Naive thymus-derived CD4-positive, alpha-beta T cell (primary cell): ENCODE measurements at regions of chr12 and their contacts with region 1.

Region 1: GRCh38 chr12:120060196-120060595 is 56.4 kb downstream of the RAB35 start:
- DNase-seq: no peak
- ATAC-seq: no peak
- H3K4me3 ChIP-seq: no peak overlapping the region
- H3K4me3 Mint-ChIP-seq: no peak overlapping the region
- H3K27ac ChIP-seq: no peak overlapping the region
- H3K27ac Mint-ChIP-seq: no peak overlapping the region
- H3K4me1 ChIP-seq: no peaks in the 10 kb centered on the region
- H3K4me1 Mint-ChIP-seq: peaks cover 0 to 13% (median 0%) of the 10 kb centered on the region in 7 donors
- H3K27me3 ChIP-seq: no peaks in the 10 kb centered on the region
- H3K27me3 Mint-ChIP-seq: no peaks in the 10 kb centered on the region

Region 2: DNA sequence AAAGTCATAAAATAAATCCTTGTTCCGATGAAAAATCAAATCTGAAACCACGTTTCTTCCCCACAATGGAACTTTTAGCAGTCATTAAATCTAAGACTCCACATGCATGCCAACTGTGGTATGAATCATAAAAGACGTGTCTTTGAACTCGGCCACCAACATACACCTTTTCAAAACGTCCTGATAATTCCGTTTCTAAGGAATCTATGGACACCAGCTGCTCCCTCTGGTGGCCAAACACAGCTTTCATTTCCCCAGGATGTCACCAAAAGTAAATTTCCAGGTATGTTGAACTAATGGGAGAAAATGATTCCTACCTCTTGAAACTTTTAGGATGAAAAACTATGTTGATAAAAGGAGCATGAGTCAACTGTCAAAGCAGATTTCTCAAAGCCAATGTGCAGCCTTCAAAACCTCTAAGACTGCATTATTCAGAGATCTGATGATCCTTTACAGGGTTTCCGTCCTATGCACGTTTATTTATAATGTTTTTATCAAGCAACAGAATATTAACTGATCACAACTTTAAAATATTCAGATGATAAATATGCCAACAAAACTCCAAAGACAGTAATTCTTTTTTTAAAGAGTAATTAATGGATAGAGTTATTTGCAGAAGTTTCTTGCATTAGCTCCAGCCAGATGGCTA is 279.3 kb before region 1 on chr12:
- CTCF ChIA-PET with region 1: no interaction called
- POLR2A ChIA-PET with region 1: no interaction called
- intact Hi-C with region 1: no loop called
- DNase-seq: no peak
- ATAC-seq: no peak
- H3K4me3 ChIP-seq: no peak overlapping the region
- H3K4me3 Mint-ChIP-seq: no peak overlapping the region
- H3K27ac ChIP-seq: no peak overlapping the region
- H3K27ac Mint-ChIP-seq: no peak overlapping the region
- H3K4me1 ChIP-seq: no peaks in the 10 kb centered on the region
- H3K4me1 Mint-ChIP-seq: peaks cover 0 to 10% (median 0%) of the 10 kb centered on the region in 7 donors
- H3K27me3 ChIP-seq: no peaks in the 10 kb centered on the region
- H3K27me3 Mint-ChIP-seq: no peaks in the 10 kb centered on the region

Region 3: DNA sequence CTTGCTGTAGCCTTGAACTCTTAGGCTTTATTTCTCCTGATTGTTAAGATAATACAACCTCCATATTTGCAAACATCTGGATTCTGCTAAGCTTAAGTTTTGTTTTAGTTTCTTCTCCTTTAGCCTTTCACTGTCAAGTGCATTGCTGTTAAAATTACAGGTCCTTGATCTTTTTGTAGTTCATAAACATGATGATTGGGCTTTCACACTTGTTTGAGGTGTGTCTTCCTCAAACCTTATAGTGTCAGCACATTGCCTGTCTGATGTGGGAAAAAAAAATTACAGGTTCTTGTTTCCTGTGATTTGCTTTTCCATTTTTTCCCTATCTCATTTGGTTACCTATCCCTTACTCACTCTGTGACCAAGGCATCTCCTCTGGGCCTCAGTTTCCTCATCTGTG is 11.9 kb before region 1 on chr12:
- CTCF ChIA-PET with region 1: interaction called, 3 read pairs
- POLR2A ChIA-PET with region 1: no interaction called
- intact Hi-C with region 1: loop called in 1 of 2 experiments (anchors 2 kb)
- DNase-seq: peak in 4 of 9 donors; percentile 14 to 31 (median 20)
- ATAC-seq: peak; percentile 74
- H3K4me3 ChIP-seq: no peak overlapping the region
- H3K4me3 Mint-ChIP-seq: peak overlapping the region in 6 of 10 donors; percentile 12 to 59 (median 38)
- H3K27ac ChIP-seq: no peak overlapping the region
- H3K27ac Mint-ChIP-seq: peak overlapping the region; percentile 62 to 90 (median 87)
- H3K4me1 ChIP-seq: peaks cover 10 to 19% of the 10 kb centered on the region in 2 donors
- H3K4me1 Mint-ChIP-seq: peaks cover 9 to 52% (median 38%) of the 10 kb centered on the region in 7 donors
- H3K27me3 ChIP-seq: no peaks in the 10 kb centered on the region
- H3K27me3 Mint-ChIP-seq: no peaks in the 10 kb centered on the region

Region 4: GRCh38 chr12:120075034-120075616 is 14.9 kb after region 1 on chr12:
- CTCF ChIA-PET with region 1: no interaction called
- POLR2A ChIA-PET with region 1: interaction called, 3 read pairs
- intact Hi-C with region 1: loop called in 1 of 2 experiments (anchors 2 kb)
- DNase-seq: peak in 6 of 9 donors; percentile 19 to 49 (median 32)
- ATAC-seq: peak; percentile 68
- H3K4me3 ChIP-seq: no peak overlapping the region
- H3K4me3 Mint-ChIP-seq: peak overlapping the region; percentile 21 to 81 (median 72)
- H3K27ac ChIP-seq: peak overlapping the region; percentile 64
- H3K27ac Mint-ChIP-seq: peak overlapping the region; percentile 89 to 97 (median 93)
- H3K4me1 ChIP-seq: peaks cover 0 to 20% of the 10 kb centered on the region in 2 donors
- H3K4me1 Mint-ChIP-seq: peaks cover 17 to 55% (median 36%) of the 10 kb centered on the region in 7 donors
- H3K27me3 ChIP-seq: no peaks in the 10 kb centered on the region
- H3K27me3 Mint-ChIP-seq: no peaks in the 10 kb centered on the region